Activated naive CD8-positive, alpha-beta T cell treated with anti-CD3 and anti-CD28 coated beads, Interleukin-2, amount 10 ng/mL, durations not matched to agents 7 days and 5 days (primary cell): ENCODE measurements at regions of chr17 and their contacts with region 1.

Region 1: GRCh38 chr17:14300575-14301278 is at the start of gene HS3ST3B1:
- DNase-seq: peak; percentile 97
- ATAC-seq: peak; percentile 88
- H3K4me3 Mint-ChIP-seq: peak within 1 kb of the TSS; percentile 96
- H3K27ac Mint-ChIP-seq: peak within 1 kb of the TSS; percentile 88
- H3K4me1 Mint-ChIP-seq: peaks cover 45% of the 10 kb centered on the region
- H3K27me3 Mint-ChIP-seq: peaks cover 43% of the 10 kb centered on the region
- total RNA-seq, gene HS3ST3B1: 9.3 to 10.0 TPM

Region 2: GRCh38 chr17:14196377-14196997 is 104.2 kb before region 1 on chr17:
- POLR2A ChIA-PET with region 1: interaction called, 44 read pairs
- DNase-seq: no peak
- ATAC-seq: peak; percentile 28
- H3K4me3 Mint-ChIP-seq: peak overlapping the region; percentile 71
- H3K27ac Mint-ChIP-seq: peak overlapping the region; percentile 91
- H3K4me1 Mint-ChIP-seq: peaks cover 78% of the 10 kb centered on the region
- H3K27me3 Mint-ChIP-seq: no peaks in the 10 kb centered on the region

Region 3: GRCh38 chr17:14205989-14206461 is 94.7 kb before region 1 on chr17:
- POLR2A ChIA-PET with region 1: interaction called, 11 read pairs
- DNase-seq: no peak
- ATAC-seq: peak; percentile 25
- H3K4me3 Mint-ChIP-seq: peak overlapping the region; percentile 30
- H3K27ac Mint-ChIP-seq: no peak overlapping the region
- H3K4me1 Mint-ChIP-seq: peaks cover 47% of the 10 kb centered on the region
- H3K27me3 Mint-ChIP-seq: no peaks in the 10 kb centered on the region

Region 4: GRCh38 chr17:14427900-14428647 is 127.3 kb after region 1 on chr17:
- POLR2A ChIA-PET with region 1: interaction called, 37 read pairs
- DNase-seq: peak; percentile 51
- ATAC-seq: peak; percentile 99
- H3K4me3 Mint-ChIP-seq: peak overlapping the region; percentile 76
- H3K27ac Mint-ChIP-seq: peak overlapping the region; percentile 86
- H3K4me1 Mint-ChIP-seq: peaks cover 30% of the 10 kb centered on the region
- H3K27me3 Mint-ChIP-seq: no peaks in the 10 kb centered on the region